Calu3 (cell line): ENCODE measurements at regions of chr19 and their contacts with region 1.

Region 1: GRCh38 chr19:6528544-6529121 is 2.2 kb upstream of the TNFSF9 start:
- DNase-seq: no peak
- H3K4me3 Mint-ChIP-seq: no peak overlapping the region
- H3K27ac Mint-ChIP-seq: no peak overlapping the region
- H3K4me1 Mint-ChIP-seq: peaks cover 30% of the 10 kb centered on the region
- H3K27me3 Mint-ChIP-seq: peaks cover 45% of the 10 kb centered on the region
- CTCF ChIP-seq: no peak

Region 2: DNA sequence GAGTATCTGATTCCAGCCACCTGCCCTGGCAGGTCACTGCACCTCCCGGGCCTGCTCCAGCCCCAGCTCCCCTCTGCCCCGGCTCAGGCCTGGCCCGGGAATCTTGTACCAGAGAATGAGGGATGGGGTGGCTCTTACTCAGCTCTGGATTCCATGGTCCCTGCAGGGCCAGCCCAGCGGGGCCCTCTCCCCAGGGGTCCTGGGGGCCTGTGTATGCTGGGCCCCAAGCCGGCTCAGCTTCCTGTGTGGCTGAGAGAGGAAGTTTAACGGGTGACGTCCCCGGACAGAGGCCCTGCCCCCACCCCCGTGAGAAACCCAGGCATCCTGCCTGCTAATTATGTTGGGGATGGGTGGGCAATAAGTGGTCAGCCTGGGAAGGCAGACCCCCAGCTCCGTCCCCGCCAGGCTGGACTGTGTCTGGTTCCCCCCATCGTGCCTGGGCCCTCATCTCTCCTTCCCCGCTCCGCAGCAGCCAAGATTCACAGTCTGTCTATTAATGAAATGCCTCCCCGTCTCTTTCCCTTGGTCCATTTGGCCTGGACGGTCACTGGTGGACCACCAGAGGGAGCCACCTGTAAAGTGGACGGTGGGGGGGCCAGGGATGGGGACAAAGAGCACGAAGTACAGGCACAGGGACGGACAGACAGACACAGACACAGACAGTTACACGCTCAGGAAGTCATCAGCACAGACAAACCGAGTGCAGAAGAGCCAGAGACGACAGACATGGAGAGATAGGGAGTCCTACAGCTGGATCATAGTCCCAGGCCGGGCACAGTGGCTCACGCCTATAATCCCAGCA is 46.9 kb before region 1 on chr19 and contains the start of gene DENND1C:
- CTCF ChIA-PET with region 1: interaction called, 11 read pairs
- intact Hi-C with region 1: no loop called
- DNase-seq: peak; percentile 43
- H3K4me3 Mint-ChIP-seq: no peak within 1 kb of the TSS
- H3K27ac Mint-ChIP-seq: no peak within 1 kb of the TSS
- H3K4me1 Mint-ChIP-seq: no peaks in the 10 kb centered on the region
- H3K27me3 Mint-ChIP-seq: peaks cover 18% of the 10 kb centered on the region
- CTCF ChIP-seq: peak; percentile 53
- total RNA-seq, gene DENND1C: not detected in 2 replicates

Region 3: GRCh38 chr19:6564393-6564792 is 35.8 kb after region 1 on chr19:
- CTCF ChIA-PET with region 1: no interaction called
- intact Hi-C with region 1: no loop called
- DNase-seq: no peak
- H3K4me3 Mint-ChIP-seq: no peak overlapping the region
- H3K27ac Mint-ChIP-seq: no peak overlapping the region
- H3K4me1 Mint-ChIP-seq: no peaks in the 10 kb centered on the region
- H3K27me3 Mint-ChIP-seq: no peaks in the 10 kb centered on the region
- CTCF ChIP-seq: no peak